ENCODE measurements at regions of chr3 and their contacts with region 1.

Region 1: DNA sequence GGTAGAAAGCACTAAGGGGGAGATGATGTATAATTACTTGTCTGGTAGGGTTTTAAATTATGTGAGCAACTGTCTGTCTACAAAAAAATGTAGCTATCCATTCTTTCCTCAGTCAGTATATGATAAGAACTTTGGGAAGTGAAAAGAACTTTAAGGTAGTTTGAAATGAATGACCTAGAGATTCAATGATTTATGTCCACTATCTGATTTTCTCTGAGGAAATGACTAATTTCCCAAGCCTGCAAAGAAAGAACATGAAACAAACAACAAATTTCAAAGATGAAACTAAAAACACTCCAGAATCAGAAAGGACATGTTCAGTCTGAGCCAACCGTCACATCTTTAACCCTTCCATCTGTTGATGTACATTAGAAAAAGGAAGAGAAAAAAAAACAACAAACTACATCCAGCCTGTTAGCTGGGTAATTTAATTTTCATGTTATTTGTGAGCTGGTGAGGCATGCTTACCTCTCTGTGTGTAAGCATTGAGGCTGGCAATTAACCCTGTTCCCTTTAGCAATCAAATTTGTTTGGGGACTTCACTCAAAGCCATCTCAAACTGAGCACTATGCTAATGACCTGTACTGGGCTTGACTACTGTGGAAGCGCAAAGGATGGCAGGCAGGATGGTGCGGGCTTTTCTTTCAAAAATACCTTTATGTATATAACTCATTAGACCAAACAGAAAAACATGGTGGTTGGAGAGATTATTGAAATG is 220.1 kb downstream of the TUSC7 start:
- DNase-seq: peak; percentile 76
- H3K4me3 ChIP-seq: peak overlapping the region in 1 of 3 experiments; percentile 38
- H3K27ac ChIP-seq: peak overlapping the region; percentile 93
- H3K4me1 ChIP-seq: peaks cover 26% of the 10 kb centered on the region
- H3K27me3 ChIP-seq: no peaks in the 10 kb centered on the region
- CTCF ChIP-seq: no peak
- POLR2A ChIP-seq: no peak

Region 2: GRCh38 chr3:117036259-117036799 is 106.7 kb after region 1 on chr3:
- CTCF ChIA-PET with region 1: no interaction called
- POLR2A ChIA-PET with region 1: no interaction called
- dilution Hi-C with region 1: no loop called
- intact Hi-C with region 1: loop called (anchors 2 kb)
- DNase-seq: peak; percentile 53
- H3K4me3 ChIP-seq: no peak overlapping the region
- H3K27ac ChIP-seq: peak overlapping the region; percentile 63
- H3K4me1 ChIP-seq: peaks cover 18% of the 10 kb centered on the region
- H3K27me3 ChIP-seq: no peaks in the 10 kb centered on the region
- CTCF ChIP-seq: no peak
- POLR2A ChIP-seq: no peak

Region 3: GRCh38 chr3:117622171-117622841 is 692.6 kb after region 1 on chr3:
- CTCF ChIA-PET with region 1: no interaction called
- POLR2A ChIA-PET with region 1: no interaction called
- dilution Hi-C with region 1: no loop called
- intact Hi-C with region 1: loop called (anchors 1 kb)
- DNase-seq: peak; percentile 91
- H3K4me3 ChIP-seq: peak overlapping the region in 1 of 3 experiments; percentile 31
- H3K27ac ChIP-seq: peak overlapping the region; percentile 97
- H3K4me1 ChIP-seq: peaks cover 22% of the 10 kb centered on the region
- H3K27me3 ChIP-seq: no peaks in the 10 kb centered on the region
- CTCF ChIP-seq: no peak
- POLR2A ChIP-seq: peak; percentile 45

Measured in endothelial cell of umbilical vein (primary cell).